T-cell (primary cell): ENCODE measurements at regions of chr17 and their contacts with region 1.

Region 1: GRCh38 chr17:5031365-5032082 is 3.7 kb downstream of the SLC52A1 start:
- DNase-seq: peak; percentile 59 to 92 (median 79)
- ATAC-seq: peak; percentile 79 to 86 (median 82)
- H3K4me3 ChIP-seq: peak overlapping the region; percentile 44 to 54
- H3K4me3 Mint-ChIP-seq: peak overlapping the region; percentile 74 to 85 (median 84)
- H3K27ac ChIP-seq: peak overlapping the region; percentile 64
- H3K27ac Mint-ChIP-seq: peak overlapping the region; percentile 91
- H3K4me1 ChIP-seq: peaks cover 10 to 36% of the 10 kb centered on the region in 2 experiments
- H3K4me1 Mint-ChIP-seq: peaks cover 25 to 29% (median 26%) of the 10 kb centered on the region in 3 donors
- H3K27me3 ChIP-seq: peaks cover 0 to 20% of the 10 kb centered on the region in 2 experiments
- H3K27me3 Mint-ChIP-seq: no peaks in the 10 kb centered on the region

Region 2: DNA sequence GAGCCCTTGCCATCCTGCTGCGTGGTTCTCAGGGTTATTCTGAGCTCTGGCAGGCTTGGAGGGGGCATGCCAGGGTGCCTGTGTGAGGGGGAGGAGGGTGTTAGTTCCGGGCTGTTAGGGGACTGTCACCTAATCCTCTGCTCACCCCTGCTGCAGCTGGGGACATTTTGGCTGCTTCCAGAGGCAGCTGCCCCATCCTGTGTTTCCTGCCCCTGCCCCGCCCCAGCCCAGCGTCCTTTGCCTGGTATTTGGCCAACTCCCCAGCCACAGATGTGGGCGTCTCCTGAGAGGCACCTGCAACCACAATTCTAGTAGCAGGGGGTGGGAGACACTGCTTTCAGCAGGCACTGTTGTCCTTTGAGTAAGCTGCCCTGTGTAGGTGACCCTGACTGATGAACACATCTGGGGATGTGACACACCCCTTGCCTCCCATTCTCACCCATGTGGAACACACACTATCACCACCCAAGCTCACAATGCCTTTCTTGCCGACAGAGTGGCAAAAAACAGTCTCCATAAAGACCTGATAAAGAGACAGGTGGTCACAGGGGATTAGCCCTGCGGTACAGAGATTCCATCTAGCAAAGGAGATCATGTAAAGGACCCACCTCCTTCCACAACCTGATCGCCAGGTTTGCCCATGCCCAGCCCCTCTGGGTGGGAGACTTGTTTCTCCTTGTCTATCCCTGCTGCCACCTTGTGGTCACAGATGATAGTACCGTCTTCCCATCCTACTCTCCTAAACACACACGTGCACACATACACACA is 128.3 kb before region 1 on chr17 and contains the start of gene CHRNE:
- CTCF ChIA-PET with region 1: interaction called, 4 to 6 read pairs
- POLR2A ChIA-PET with region 1: interaction called in 1 of 2 experiments, 11 read pairs
- DNase-seq: peak in 34 of 35 experiments; percentile 48 to 91 (median 70)
- ATAC-seq: peak; percentile 19 to 43 (median 40)
- H3K4me3 ChIP-seq: no peak within 1 kb of the TSS
- H3K4me3 Mint-ChIP-seq: peak within 1 kb of the TSS; percentile 21 to 67 (median 22)
- H3K27ac ChIP-seq: peak within 1 kb of the TSS; percentile 65
- H3K27ac Mint-ChIP-seq: peak within 1 kb of the TSS; percentile 34 to 40
- H3K4me1 ChIP-seq: peaks cover 14 to 60% of the 10 kb centered on the region in 2 experiments
- H3K4me1 Mint-ChIP-seq: peaks cover 36 to 45% (median 38%) of the 10 kb centered on the region in 3 donors
- H3K27me3 ChIP-seq: peaks cover 0 to 28% of the 10 kb centered on the region in 2 experiments
- H3K27me3 Mint-ChIP-seq: no peaks in the 10 kb centered on the region
- total RNA-seq, gene CHRNE: 0.73 to 3.5 (median 1.3) TPM

Region 3: DNA sequence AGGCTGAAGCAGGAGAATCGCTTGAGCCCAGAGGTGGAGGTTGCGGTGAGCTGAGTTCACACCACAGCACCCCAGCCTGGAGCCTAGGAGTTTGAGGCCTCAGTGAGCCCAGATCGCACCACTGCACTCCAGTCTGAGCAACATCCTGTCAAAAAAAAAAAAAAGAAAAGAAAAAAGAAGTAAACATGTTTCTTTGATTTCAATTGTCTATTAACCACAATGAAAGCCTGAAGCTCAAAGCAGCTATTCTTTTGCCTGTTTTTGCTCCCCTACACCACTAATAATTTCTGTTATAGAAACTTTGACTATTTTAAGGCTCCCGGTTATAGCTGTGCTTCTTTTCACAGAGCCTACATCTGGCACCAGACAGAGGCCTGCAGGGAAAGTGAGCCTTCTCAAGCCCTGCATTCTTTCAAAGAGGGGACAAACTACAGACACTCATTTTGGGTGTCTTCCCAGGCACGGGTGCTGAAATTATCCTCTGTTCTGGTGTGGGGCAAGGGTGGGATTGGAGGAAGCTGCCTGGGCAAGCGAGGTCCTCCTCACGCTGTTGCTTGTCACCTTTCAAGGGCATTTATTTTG is 17.9 kb after region 1 on chr17:
- CTCF ChIA-PET with region 1: interaction called, 4 to 12 read pairs
- POLR2A ChIA-PET with region 1: no interaction called
- DNase-seq: peak; percentile 40 to 88 (median 73)
- ATAC-seq: peak; percentile 96 to 99 (median 98)
- H3K4me3 ChIP-seq: no peak overlapping the region
- H3K4me3 Mint-ChIP-seq: peak overlapping the region; percentile 54 to 65 (median 57)
- H3K27ac ChIP-seq: peak overlapping the region; percentile 76
- H3K27ac Mint-ChIP-seq: peak overlapping the region; percentile 96 to 99
- H3K4me1 ChIP-seq: peaks cover 28 to 55% of the 10 kb centered on the region in 2 experiments
- H3K4me1 Mint-ChIP-seq: peaks cover 48 to 61% (median 55%) of the 10 kb centered on the region in 3 donors
- H3K27me3 ChIP-seq: no peaks in the 10 kb centered on the region
- H3K27me3 Mint-ChIP-seq: no peaks in the 10 kb centered on the region

Region 4: DNA sequence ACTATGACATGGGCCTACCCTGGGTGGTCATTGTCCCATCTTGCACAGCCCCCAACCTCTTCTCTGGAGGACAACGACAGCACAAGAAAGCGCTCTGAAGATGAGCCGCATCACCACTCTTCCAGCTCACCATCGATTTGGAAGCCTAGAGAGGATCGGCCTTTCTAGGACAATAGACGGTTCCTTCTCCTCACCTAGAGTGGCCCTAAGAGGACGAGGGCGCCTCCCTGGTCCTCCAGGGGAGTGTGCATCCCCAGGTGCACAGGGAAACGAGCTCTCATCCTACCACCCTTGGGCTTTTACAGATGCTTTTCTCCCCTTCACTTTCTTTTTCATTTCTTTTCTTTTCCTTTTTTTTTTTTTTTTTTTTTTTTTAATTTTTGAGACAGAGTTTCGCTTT is 24.0 kb after region 1 on chr17:
- CTCF ChIA-PET with region 1: interaction called, 6 to 12 read pairs
- POLR2A ChIA-PET with region 1: interaction called in 1 of 2 experiments, 6 read pairs
- DNase-seq: no peak
- ATAC-seq: no peak
- H3K4me3 ChIP-seq: no peak overlapping the region
- H3K4me3 Mint-ChIP-seq: no peak overlapping the region
- H3K27ac ChIP-seq: no peak overlapping the region
- H3K27ac Mint-ChIP-seq: no peak overlapping the region
- H3K4me1 ChIP-seq: peaks cover 0 to 1% of the 10 kb centered on the region in 2 experiments
- H3K4me1 Mint-ChIP-seq: peaks cover under 1 to 3% (median 3%) of the 10 kb centered on the region in 3 donors
- H3K27me3 ChIP-seq: no peaks in the 10 kb centered on the region
- H3K27me3 Mint-ChIP-seq: no peaks in the 10 kb centered on the region

Region 5: DNA sequence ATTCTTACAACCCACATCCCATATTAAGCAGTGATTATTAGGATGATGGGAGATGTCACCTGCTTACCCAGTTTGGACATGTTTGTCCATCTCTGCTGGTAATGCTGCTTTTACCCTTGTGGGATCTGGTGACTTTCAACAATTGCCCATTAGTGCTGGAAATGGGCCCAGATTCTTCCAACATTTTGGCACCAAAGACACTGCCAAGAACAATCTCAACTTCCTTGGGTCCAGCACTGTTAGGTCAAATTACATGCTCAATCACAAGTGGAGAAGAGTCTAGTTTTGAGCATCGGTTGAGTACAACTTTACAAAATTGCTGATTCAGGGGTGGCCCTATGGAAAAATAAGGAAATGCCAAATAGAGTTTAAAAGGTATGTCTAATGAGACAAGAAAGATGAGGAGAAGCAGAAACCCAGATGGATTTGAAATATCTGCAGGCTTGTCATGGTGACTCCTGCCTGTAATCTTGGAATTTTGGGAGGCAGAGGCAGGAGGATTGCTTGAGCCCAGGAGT is 33.8 kb after region 1 on chr17:
- CTCF ChIA-PET with region 1: interaction called, 12 to 13 read pairs
- POLR2A ChIA-PET with region 1: no interaction called
- DNase-seq: no peak
- ATAC-seq: no peak
- H3K4me3 ChIP-seq: no peak overlapping the region
- H3K4me3 Mint-ChIP-seq: no peak overlapping the region
- H3K27ac ChIP-seq: no peak overlapping the region
- H3K27ac Mint-ChIP-seq: no peak overlapping the region
- H3K4me1 ChIP-seq: peaks cover 0 to 5% of the 10 kb centered on the region in 2 experiments
- H3K4me1 Mint-ChIP-seq: peaks cover 0 to 8% (median 7%) of the 10 kb centered on the region in 3 donors
- H3K27me3 ChIP-seq: no peaks in the 10 kb centered on the region
- H3K27me3 Mint-ChIP-seq: no peaks in the 10 kb centered on the region

Region 6: DNA sequence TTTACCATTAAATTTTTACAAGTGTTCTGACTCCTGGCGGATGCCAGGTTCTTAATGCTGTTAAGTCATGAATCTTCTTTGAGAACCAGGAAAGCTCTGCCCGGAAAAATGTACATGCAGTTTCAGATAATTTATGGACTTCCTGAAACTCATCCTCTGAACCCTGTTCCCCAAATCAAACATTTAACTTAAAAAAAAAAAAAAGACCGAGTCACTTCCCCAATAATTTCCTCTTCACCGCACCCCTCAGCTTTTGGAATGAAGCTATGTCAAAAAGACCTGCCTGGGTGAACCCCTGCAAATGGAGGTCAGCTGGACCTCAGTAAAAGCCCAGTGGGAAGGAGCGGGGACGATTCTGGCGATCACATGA is 65.2 kb after region 1 on chr17:
- CTCF ChIA-PET with region 1: no interaction called
- POLR2A ChIA-PET with region 1: no interaction called
- DNase-seq: no peak
- ATAC-seq: no peak
- H3K4me3 ChIP-seq: peak overlapping the region; percentile 30 to 79
- H3K4me3 Mint-ChIP-seq: peak overlapping the region; percentile 77 to 82 (median 79)
- H3K27ac ChIP-seq: no peak overlapping the region
- H3K27ac Mint-ChIP-seq: no peak overlapping the region
- H3K4me1 ChIP-seq: peaks cover 0 to 8% of the 10 kb centered on the region in 2 experiments
- H3K4me1 Mint-ChIP-seq: peaks cover 0 to 8% (median 6%) of the 10 kb centered on the region in 3 donors
- H3K27me3 ChIP-seq: peaks cover 0 to 13% of the 10 kb centered on the region in 2 experiments
- H3K27me3 Mint-ChIP-seq: peaks cover 0 to 9% of the 10 kb centered on the region in 2 donors